Sigmoid colon (tissue), 7 donors: ENCODE measurements at regions of chr19 and their contacts with region 1.

Region 1: GRCh38 chr19:52048555-52049501 is at the start of gene ZNF432:
- DNase-seq: peak; percentile 97
- H3K4me3 ChIP-seq: peak within 1 kb of the TSS; percentile 57 to 71 (median 66)
- H3K27ac ChIP-seq: peak within 1 kb of the TSS; percentile 90 to 94 (median 92)
- H3K4me1 ChIP-seq: peaks cover 0 to 4% (median 0%) of the 10 kb centered on the region in 4 donors
- H3K27me3 ChIP-seq: no peaks in the 10 kb centered on the region
- CTCF ChIP-seq: no peak
- EP300 ChIP-seq: peak in 1 of 4 donors; percentile 8
- POLR2A ChIP-seq: peak in 1 of 2 donors; percentile 27
- total RNA-seq, gene ZNF432: 10.0 to 17.1 (median 11.9) TPM

Region 2: GRCh38 chr19:52007806-52008557 is 40.8 kb before region 1 on chr19 and contains the start of gene ZNF615:
- intact Hi-C with region 1: loop called (anchors 2 kb)
- DNase-seq: peak; percentile 93
- H3K4me3 ChIP-seq: peak within 1 kb of the TSS; percentile 63 to 83 (median 75)
- H3K27ac ChIP-seq: peak within 1 kb of the TSS; percentile 81 to 91 (median 86)
- H3K4me1 ChIP-seq: peaks cover 0 to 11% (median 8%) of the 10 kb centered on the region in 4 donors
- H3K27me3 ChIP-seq: no peaks in the 10 kb centered on the region
- CTCF ChIP-seq: no peak
- EP300 ChIP-seq: no peak
- POLR2A ChIP-seq: peak in 1 of 2 donors; percentile 35
- total RNA-seq, gene ZNF615: 18.0 to 26.8 (median 22.5) TPM

Region 3: DNA sequence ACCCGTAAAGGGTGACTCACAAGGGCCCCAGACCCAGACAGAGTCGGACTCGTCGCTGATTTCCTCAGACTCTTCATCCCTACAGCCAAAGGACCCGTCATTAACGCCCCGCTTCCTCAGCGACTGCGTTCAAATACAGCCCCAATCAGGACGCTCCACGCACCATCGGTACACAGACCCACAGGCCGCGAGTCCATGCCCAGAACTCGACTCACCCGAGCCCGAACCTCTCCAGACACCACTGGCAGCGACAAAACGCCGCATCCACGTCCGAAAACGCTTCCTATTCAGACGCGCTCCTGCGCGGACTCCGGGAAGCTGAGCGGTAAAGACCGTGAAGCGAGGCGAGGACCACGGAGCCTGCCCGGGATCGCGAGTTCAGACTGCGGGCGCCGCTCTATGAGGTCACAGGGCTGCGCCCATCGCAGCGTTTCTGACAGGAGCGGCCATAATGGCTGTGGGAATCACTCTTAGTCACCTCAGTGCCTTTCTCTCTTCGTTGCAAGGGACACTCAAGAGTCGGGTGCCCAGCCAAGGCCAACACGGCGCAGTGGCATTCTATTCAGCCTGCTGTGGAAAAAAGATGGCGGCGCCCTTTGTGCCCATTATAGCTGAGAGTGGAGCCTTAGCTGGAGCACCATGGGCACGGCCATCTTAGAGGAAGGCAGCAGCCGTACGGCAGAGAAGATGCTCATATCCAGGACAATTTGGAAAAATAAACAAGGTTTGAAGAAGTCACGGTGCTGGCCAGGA is 20.6 kb before region 1 on chr19 and contains the start of gene ZNF614:
- intact Hi-C with region 1: loop called (anchors 2 kb)
- DNase-seq: peak; percentile 90
- H3K4me3 ChIP-seq: peak within 1 kb of the TSS; percentile 57 to 87 (median 71)
- H3K27ac ChIP-seq: peak within 1 kb of the TSS; percentile 90 to 94 (median 92)
- H3K4me1 ChIP-seq: peaks cover 0 to 23% (median 14%) of the 10 kb centered on the region in 4 donors
- H3K27me3 ChIP-seq: no peaks in the 10 kb centered on the region
- CTCF ChIP-seq: no peak
- EP300 ChIP-seq: no peak
- POLR2A ChIP-seq: peak; percentile 9 to 59
- total RNA-seq, gene ZNF614: 6.6 to 13.5 (median 10.7) TPM

Region 4: DNA sequence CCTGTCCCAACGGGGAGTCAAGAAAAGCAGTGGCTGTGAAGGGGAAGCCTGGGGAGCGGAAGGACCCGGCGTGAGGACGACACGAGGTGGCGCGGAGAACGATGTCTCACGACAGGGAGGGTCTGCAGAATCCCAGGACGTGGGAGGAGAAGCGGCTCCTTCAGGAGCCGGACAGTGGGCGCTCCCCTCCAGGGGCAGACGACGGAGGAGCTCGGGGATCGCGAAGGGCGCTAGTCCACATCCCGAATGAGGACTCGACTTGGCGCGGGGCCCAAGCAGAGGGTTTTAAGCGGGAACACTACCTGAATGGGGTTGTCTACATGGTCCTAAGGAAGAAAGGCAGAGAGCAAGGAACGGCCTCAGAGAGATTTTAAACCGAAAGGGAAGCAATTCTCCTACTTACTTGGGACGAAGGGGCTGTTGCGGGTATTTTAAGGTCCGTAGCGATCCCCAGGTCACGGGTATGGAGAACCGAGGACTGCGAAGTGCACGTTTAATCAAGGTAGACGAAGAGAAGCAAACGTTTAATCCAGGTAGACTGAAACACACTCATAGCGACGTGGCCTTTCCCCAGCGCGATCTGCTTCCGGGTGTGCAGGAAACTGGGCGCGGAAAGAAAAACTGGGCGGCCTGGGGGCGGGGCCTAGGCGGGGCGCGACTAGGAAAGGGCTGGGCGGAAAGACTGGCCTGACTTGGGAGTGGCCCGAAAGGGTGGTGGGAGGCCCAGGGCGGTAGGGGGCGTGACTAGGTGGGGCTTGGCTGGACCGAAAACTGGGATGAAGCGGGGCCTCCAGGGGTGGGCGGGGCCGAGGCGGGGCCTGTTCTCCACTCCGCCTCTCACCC is 46.6 kb after region 1 on chr19 and contains the start of gene ZNF841:
- intact Hi-C with region 1: loop called (anchors 2 kb)
- DNase-seq: peak; percentile 98
- H3K4me3 ChIP-seq: peak within 1 kb of the TSS; percentile 69 to 91 (median 87)
- H3K27ac ChIP-seq: peak within 1 kb of the TSS; percentile 71 to 86 (median 80)
- H3K4me1 ChIP-seq: peaks cover 0 to 28% (median 20%) of the 10 kb centered on the region in 4 donors
- H3K27me3 ChIP-seq: no peaks in the 10 kb centered on the region
- CTCF ChIP-seq: no peak
- EP300 ChIP-seq: no peak
- POLR2A ChIP-seq: peak; percentile 51 to 54
- total RNA-seq, gene ZNF841: 11.8 to 26.6 (median 12.7) TPM